ENCODE measurements at regions of chr7 and their contacts with region 1.

Region 1: GRCh38 chr7:91288208-91288824 is 24.1 kb downstream of the FZD1 start:
- DNase-seq: peak; percentile 47 to 81 (median 54)
- ATAC-seq: peak; percentile 93
- H3K4me3 ChIP-seq: no peak overlapping the region
- H3K27ac ChIP-seq: no peak overlapping the region
- H3K4me1 ChIP-seq: no peaks in the 10 kb centered on the region
- H3K27me3 ChIP-seq: no peaks in the 10 kb centered on the region; a peak in 1 of 5 replicates
- CTCF ChIP-seq: peak; percentile 74 to 85 (median 82)
- EP300 ChIP-seq: no peak
- POLR2A ChIP-seq: no peak
- RAD21 ChIP-seq: peak; percentile 66 to 83

Region 2: DNA sequence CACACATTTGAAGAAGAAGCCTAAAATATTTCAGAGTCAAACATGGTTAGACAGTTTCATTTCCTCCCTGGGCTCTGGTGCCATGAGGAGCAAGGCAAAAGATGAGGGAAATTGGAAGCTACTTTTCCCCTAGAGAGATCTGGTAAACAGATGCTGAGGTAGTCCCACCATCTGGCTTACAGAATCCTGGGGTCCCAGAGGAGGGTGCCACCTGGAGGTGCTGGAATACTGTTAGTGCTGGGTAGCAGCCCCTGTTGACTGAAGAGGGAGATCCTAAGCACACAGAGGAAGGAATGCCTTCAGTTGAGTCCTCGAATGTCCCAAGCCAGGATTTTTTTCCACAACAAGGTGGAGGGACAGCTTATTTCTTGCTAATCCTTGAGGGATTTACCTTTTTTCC is 136.1 kb after region 1 on chr7:
- CTCF ChIA-PET with region 1: no interaction called
- POLR2A ChIA-PET with region 1: no interaction called
- in situ Hi-C with region 1: no loop called
- intact Hi-C with region 1: loop called (anchors 5 kb)
- DNase-seq: peak in 2 of 4 experiments; percentile 9 to 15
- ATAC-seq: peak; percentile 52; the same call in 1 of the 3 replicates
- H3K4me3 ChIP-seq: no peak overlapping the region
- H3K27ac ChIP-seq: no peak overlapping the region
- H3K4me1 ChIP-seq: no peaks in the 10 kb centered on the region
- H3K27me3 ChIP-seq: 0 out of 5 replicates have a peak, but pooled peaks cover 0 to 3% of the 10 kb centered on the region in 2 experiments
- CTCF ChIP-seq: peak; percentile 25 to 36 (median 32); a peak in 5 of 6 replicates
- EP300 ChIP-seq: no peak
- POLR2A ChIP-seq: no peak
- RAD21 ChIP-seq: peak in 1 of 2 experiments; percentile 45; a peak in 2 of 4 replicates

Region 3: GRCh38 chr7:91717681-91718470 is 429.6 kb after region 1 on chr7:
- CTCF ChIA-PET with region 1: no interaction called
- POLR2A ChIA-PET with region 1: no interaction called
- in situ Hi-C with region 1: no loop called
- intact Hi-C with region 1: loop called (anchors 10 kb)
- DNase-seq: peak in 1 of 4 experiments; percentile 1
- ATAC-seq: no peak
- H3K4me3 ChIP-seq: no peak overlapping the region
- H3K27ac ChIP-seq: no peak overlapping the region
- H3K4me1 ChIP-seq: no peaks in the 10 kb centered on the region
- H3K27me3 ChIP-seq: no peaks in the 10 kb centered on the region
- CTCF ChIP-seq: no peak
- EP300 ChIP-seq: no peak
- POLR2A ChIP-seq: no peak
- RAD21 ChIP-seq: no peak

Measured in K562 (cell line).